ENCODE measurements at regions of chr16 and their contacts with region 1.

Region 1: GRCh38 chr16:8963825-8964441 is at the start of gene USP7:
- DNase-seq: peak; percentile 91 to 92 (median 91)
- H3K4me3 ChIP-seq: peak within 1 kb of the TSS; percentile 51 to 67
- H3K4me3 Mint-ChIP-seq: peak within 1 kb of the TSS; percentile 86 to 98 (median 94)
- H3K27ac ChIP-seq: peak within 1 kb of the TSS; percentile 65
- H3K27ac Mint-ChIP-seq: peak within 1 kb of the TSS; percentile 6 to 98 (median 82)
- H3K4me1 ChIP-seq: peaks cover 38% of the 10 kb centered on the region
- H3K4me1 Mint-ChIP-seq: peaks cover 32 to 47% (median 37%) of the 10 kb centered on the region in 4 donors
- H3K27me3 ChIP-seq: no peaks in the 10 kb centered on the region
- H3K27me3 Mint-ChIP-seq: no peaks in the 10 kb centered on the region
- total RNA-seq, gene USP7: 194 to 206 TPM

Region 2: GRCh38 chr16:8674413-8675022 is 289.4 kb before region 1 on chr16 and contains the start of gene ABAT:
- CTCF ChIA-PET with region 1: no interaction called
- POLR2A ChIA-PET with region 1: no interaction called
- intact Hi-C with region 1: loop called (anchors 5 kb)
- DNase-seq: peak; percentile 85 to 92 (median 88)
- H3K4me3 ChIP-seq: peak within 1 kb of the TSS; percentile 85 to 87
- H3K4me3 Mint-ChIP-seq: peak within 1 kb of the TSS; percentile 87 to 95 (median 91)
- H3K27ac ChIP-seq: peak within 1 kb of the TSS; percentile 62
- H3K27ac Mint-ChIP-seq: peak within 1 kb of the TSS; percentile 87 to 98 (median 92)
- H3K4me1 ChIP-seq: peaks cover 17% of the 10 kb centered on the region
- H3K4me1 Mint-ChIP-seq: peaks cover 8 to 24% (median 16%) of the 10 kb centered on the region in 4 donors
- H3K27me3 ChIP-seq: no peaks in the 10 kb centered on the region
- H3K27me3 Mint-ChIP-seq: no peaks in the 10 kb centered on the region
- total RNA-seq, gene ABAT: 10.0 to 10.8 TPM

Region 3: GRCh38 chr16:8868416-8869211 is 95.3 kb before region 1 on chr16 and contains the start of gene CARHSP1:
- CTCF ChIA-PET with region 1: no interaction called
- POLR2A ChIA-PET with region 1: interaction called, 7 read pairs
- intact Hi-C with region 1: loop called (anchors 2 kb)
- DNase-seq: peak; percentile 71 to 80 (median 77)
- H3K4me3 ChIP-seq: peak within 1 kb of the TSS; percentile 54 to 81
- H3K4me3 Mint-ChIP-seq: peak within 1 kb of the TSS; percentile 93 to 97 (median 94)
- H3K27ac ChIP-seq: peak within 1 kb of the TSS; percentile 54
- H3K27ac Mint-ChIP-seq: peak within 1 kb of the TSS; percentile 85 to 97 (median 93)
- H3K4me1 ChIP-seq: peaks cover 54% of the 10 kb centered on the region
- H3K4me1 Mint-ChIP-seq: peaks cover 25 to 57% (median 45%) of the 10 kb centered on the region in 4 donors
- H3K27me3 ChIP-seq: no peaks in the 10 kb centered on the region
- H3K27me3 Mint-ChIP-seq: no peaks in the 10 kb centered on the region
- total RNA-seq, gene CARHSP1: 39.3 to 43.2 TPM

Region 4: GRCh38 chr16:8924214-8924613 is 39.7 kb before region 1 on chr16:
- CTCF ChIA-PET with region 1: no interaction called
- POLR2A ChIA-PET with region 1: interaction called, 3 read pairs
- intact Hi-C with region 1: loop called (anchors 5 kb)
- DNase-seq: no peak
- H3K4me3 ChIP-seq: no peak overlapping the region
- H3K4me3 Mint-ChIP-seq: peak overlapping the region in 1 of 8 donors; percentile 10
- H3K27ac ChIP-seq: no peak overlapping the region
- H3K27ac Mint-ChIP-seq: peak overlapping the region in 6 of 7 donors; percentile 7 to 66 (median 58)
- H3K4me1 ChIP-seq: peaks cover 60% of the 10 kb centered on the region
- H3K4me1 Mint-ChIP-seq: peaks cover 38 to 77% (median 61%) of the 10 kb centered on the region in 4 donors
- H3K27me3 ChIP-seq: no peaks in the 10 kb centered on the region
- H3K27me3 Mint-ChIP-seq: no peaks in the 10 kb centered on the region

Region 5: DNA sequence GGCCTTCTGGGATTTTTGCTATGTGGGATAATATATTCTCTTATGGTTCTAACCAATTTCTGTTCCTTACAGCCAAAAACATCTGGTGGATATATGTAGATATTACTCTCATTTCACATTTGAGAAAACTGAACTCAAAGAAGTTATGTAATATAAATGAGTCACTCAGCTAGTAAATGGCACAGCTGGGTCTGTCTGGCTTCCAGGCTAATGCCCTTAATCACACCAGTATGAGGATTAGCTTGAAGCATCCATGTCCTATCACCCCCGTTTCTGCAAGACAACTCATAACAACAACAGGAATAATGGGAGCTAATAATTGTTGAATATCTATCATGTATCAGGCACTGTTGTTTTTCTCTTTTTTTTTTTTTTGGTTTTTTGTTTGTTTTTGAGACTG is 34.2 kb after region 1 on chr16:
- CTCF ChIA-PET with region 1: no interaction called
- POLR2A ChIA-PET with region 1: no interaction called
- intact Hi-C with region 1: no loop called
- DNase-seq: no peak
- H3K4me3 ChIP-seq: no peak overlapping the region
- H3K4me3 Mint-ChIP-seq: no peak overlapping the region
- H3K27ac ChIP-seq: no peak overlapping the region
- H3K27ac Mint-ChIP-seq: no peak overlapping the region
- H3K4me1 ChIP-seq: no peaks in the 10 kb centered on the region
- H3K4me1 Mint-ChIP-seq: no peaks in the 10 kb centered on the region
- H3K27me3 ChIP-seq: no peaks in the 10 kb centered on the region
- H3K27me3 Mint-ChIP-seq: no peaks in the 10 kb centered on the region

Region 6: GRCh38 chr16:10743610-10744393 is 1779.9 kb after region 1 on chr16 and contains the start of gene NUBP1:
- CTCF ChIA-PET with region 1: no interaction called
- POLR2A ChIA-PET with region 1: no interaction called
- intact Hi-C with region 1: loop called (anchors 5 kb)
- DNase-seq: peak; percentile 98 to 100 (median 98)
- H3K4me3 ChIP-seq: peak within 1 kb of the TSS; percentile 63 to 81
- H3K4me3 Mint-ChIP-seq: peak within 1 kb of the TSS; percentile 90 to 97 (median 95)
- H3K27ac ChIP-seq: peak within 1 kb of the TSS; percentile 92
- H3K27ac Mint-ChIP-seq: peak within 1 kb of the TSS; percentile 93 to 100 (median 99)
- H3K4me1 ChIP-seq: peaks cover 19% of the 10 kb centered on the region
- H3K4me1 Mint-ChIP-seq: peaks cover 16 to 30% (median 24%) of the 10 kb centered on the region in 4 donors
- H3K27me3 ChIP-seq: no peaks in the 10 kb centered on the region
- H3K27me3 Mint-ChIP-seq: no peaks in the 10 kb centered on the region
- total RNA-seq, gene NUBP1: 23.5 to 28.4 TPM